Activated CD4-positive, alpha-beta T cell treated with anti-CD3 and anti-CD28 coated beads for 36 hours (primary cell): ENCODE measurements at regions of chr2 and their contacts with region 1.

Region 1: GRCh38 chr2:161265874-161266273 is 42.4 kb upstream of the PSMD14 start:
- DNase-seq: no peak
- ATAC-seq: no peak
- H3K4me3 Mint-ChIP-seq: no peak overlapping the region
- H3K27ac Mint-ChIP-seq: no peak overlapping the region
- H3K4me1 Mint-ChIP-seq: no peaks in the 10 kb centered on the region
- H3K27me3 Mint-ChIP-seq: peaks cover 6% of the 10 kb centered on the region

Region 2: DNA sequence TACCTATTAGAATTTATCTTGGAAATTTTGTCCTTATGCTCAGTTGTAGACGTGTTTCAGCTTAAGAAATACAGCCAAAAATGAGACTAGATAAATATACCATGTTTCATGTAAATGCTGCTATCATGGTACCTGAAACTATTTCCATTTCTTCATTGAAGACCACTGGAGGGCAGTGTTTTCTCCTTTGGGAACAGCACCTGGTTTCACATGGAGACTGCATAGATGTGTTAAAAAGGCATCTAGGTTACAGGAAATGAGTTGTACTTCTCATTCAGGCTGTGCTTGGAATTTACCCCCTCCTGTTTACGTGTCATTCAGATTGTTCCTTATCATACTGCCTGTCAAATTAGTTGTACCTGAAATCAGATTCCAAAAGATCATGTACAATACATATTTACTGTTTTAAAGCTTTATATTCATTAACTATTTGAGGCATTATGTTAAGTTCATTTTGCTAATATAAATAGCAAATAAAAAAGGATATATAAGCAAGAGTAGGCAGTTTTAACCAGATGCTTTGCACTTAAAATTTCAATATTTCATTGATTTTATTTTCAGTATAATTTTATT is 14.9 kb before region 1 on chr2:
- CTCF ChIA-PET with region 1: interaction called, 11 read pairs
- POLR2A ChIA-PET with region 1: no interaction called
- intact Hi-C with region 1: no loop called
- DNase-seq: no peak
- ATAC-seq: peak; percentile 69
- H3K4me3 Mint-ChIP-seq: no peak overlapping the region
- H3K27ac Mint-ChIP-seq: no peak overlapping the region
- H3K4me1 Mint-ChIP-seq: peaks cover 19% of the 10 kb centered on the region
- H3K27me3 Mint-ChIP-seq: no peaks in the 10 kb centered on the region